ENCODE measurements at regions of chr11 and their contacts with region 1.

Region 1: DNA sequence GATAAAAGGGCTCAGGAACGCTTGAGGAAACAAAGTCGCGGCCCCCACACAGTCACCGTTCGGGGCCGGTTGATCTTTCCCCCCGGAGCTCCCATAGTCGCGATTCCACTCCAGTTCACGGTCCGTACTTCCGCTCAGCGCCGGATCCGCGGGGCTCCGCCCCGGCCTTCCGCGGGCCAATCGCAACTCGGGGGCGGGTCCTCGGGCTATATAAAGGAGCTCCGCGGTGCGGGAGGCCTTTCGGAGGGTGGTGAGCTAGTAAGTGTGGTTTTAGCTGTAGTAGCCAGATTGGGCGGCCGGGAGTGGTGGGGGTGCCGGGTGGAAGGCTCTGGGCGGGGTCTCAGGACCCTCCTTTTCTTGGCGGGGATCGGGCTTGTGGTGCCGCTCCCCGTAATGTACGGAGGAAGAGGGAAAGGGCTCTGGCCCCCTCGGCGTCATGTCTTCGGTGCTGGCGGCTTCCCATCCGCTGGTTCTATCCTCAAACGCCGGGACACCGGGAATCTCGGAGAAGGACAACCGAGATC is at the starts of genes C11orf98 and CSKMT:
- DNase-seq: peak; percentile 84
- ATAC-seq: peak; percentile 81
- H3K4me3 ChIP-seq: peak within 1 kb of the TSS; percentile 99
- H3K27ac ChIP-seq: peak within 1 kb of the TSS; percentile 96
- H3K4me1 ChIP-seq: peaks cover 24 to 43% of the 10 kb centered on the region in 2 experiments; a peak in 3 of 4 replicates
- H3K27me3 ChIP-seq: no peaks in the 10 kb centered on the region
- CTCF ChIP-seq: no peak
- POLR2A ChIP-seq: peak; percentile 99
- RAD21 ChIP-seq: no peak
- total RNA-seq, gene C11orf98: 121 TPM
- total RNA-seq, gene CSKMT: 63.5 TPM

Region 2: GRCh38 chr11:62324738-62325556 is 340.2 kb before region 1 on chr11:
- CTCF ChIA-PET with region 1: no interaction called
- POLR2A ChIA-PET with region 1: no interaction called
- RAD21 ChIA-PET with region 1: no interaction called
- intact Hi-C with region 1: no loop called
- DNase-seq: peak; percentile 34
- ATAC-seq: peak; percentile 100
- H3K4me3 ChIP-seq: no peak overlapping the region
- H3K27ac ChIP-seq: no peak overlapping the region
- H3K4me1 ChIP-seq: no peaks in the 10 kb centered on the region
- H3K27me3 ChIP-seq: no peaks in the 10 kb centered on the region
- CTCF ChIP-seq: peak; percentile 90 to 97 (median 93)
- POLR2A ChIP-seq: no peak
- RAD21 ChIP-seq: peak; percentile 86

Region 3: DNA sequence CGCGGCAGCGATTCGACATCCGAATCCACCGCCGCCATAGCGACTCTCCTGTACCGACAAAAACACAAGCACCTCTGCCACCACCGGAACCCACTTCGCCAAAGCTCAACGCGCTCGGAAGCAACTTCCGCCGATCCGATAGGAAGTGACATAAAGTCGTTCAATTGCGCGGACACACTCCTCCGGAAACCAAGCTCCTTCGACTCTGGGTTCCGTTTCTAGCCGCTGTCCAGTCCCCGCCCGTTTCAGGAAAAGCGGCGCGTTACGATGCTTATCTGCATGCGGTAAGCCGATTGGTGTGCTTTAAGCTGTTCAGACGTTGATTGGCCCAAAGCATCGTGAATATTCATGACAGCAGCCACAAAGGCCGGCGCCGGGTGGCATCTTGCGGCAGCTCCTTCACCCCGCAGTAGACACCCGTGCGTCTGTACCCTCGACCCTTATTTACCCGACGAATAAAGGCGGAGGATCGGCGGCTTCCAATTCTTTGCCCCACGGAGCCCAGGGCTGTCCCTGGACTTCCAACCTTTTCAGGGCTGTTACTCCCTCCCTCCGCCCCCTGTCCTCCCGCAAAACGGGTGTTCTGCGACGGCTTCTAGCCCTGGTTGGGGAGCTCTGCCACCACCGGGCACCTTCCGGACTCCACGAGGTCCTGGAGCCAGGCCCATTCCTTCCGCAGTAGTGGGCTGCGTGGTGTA is 73.5 kb before region 1 on chr11 and contains the start of gene TUT1:
- CTCF ChIA-PET with region 1: interaction called, 4 read pairs
- POLR2A ChIA-PET with region 1: interaction called, 37 read pairs
- RAD21 ChIA-PET with region 1: no interaction called
- intact Hi-C with region 1: loop called (anchors 5 kb)
- DNase-seq: peak; percentile 99
- ATAC-seq: peak; percentile 90
- H3K4me3 ChIP-seq: peak within 1 kb of the TSS; percentile 78 to 97
- H3K27ac ChIP-seq: peak within 1 kb of the TSS; percentile 77
- H3K4me1 ChIP-seq: peaks cover 21 to 36% of the 10 kb centered on the region in 2 experiments
- H3K27me3 ChIP-seq: no peaks in the 10 kb centered on the region
- CTCF ChIP-seq: no peak
- POLR2A ChIP-seq: peak; percentile 97
- RAD21 ChIP-seq: no peak
- total RNA-seq, gene TUT1: 49.0 TPM

Region 4: GRCh38 chr11:62621567-62622470 is 43.3 kb before region 1 on chr11 and contains the start of gene B3GAT3:
- CTCF ChIA-PET with region 1: no interaction called
- POLR2A ChIA-PET with region 1: interaction called, 19 read pairs
- RAD21 ChIA-PET with region 1: no interaction called
- intact Hi-C with region 1: no loop called
- DNase-seq: peak; percentile 99
- ATAC-seq: peak; percentile 96
- H3K4me3 ChIP-seq: peak within 1 kb of the TSS; percentile 96 to 98
- H3K27ac ChIP-seq: peak within 1 kb of the TSS; percentile 75
- H3K4me1 ChIP-seq: peaks cover 12 to 20% of the 10 kb centered on the region in 2 experiments
- H3K27me3 ChIP-seq: no peaks in the 10 kb centered on the region
- CTCF ChIP-seq: no peak
- POLR2A ChIP-seq: peak; percentile 55
- RAD21 ChIP-seq: no peak
- total RNA-seq, gene B3GAT3: 51.2 TPM

Region 5: DNA sequence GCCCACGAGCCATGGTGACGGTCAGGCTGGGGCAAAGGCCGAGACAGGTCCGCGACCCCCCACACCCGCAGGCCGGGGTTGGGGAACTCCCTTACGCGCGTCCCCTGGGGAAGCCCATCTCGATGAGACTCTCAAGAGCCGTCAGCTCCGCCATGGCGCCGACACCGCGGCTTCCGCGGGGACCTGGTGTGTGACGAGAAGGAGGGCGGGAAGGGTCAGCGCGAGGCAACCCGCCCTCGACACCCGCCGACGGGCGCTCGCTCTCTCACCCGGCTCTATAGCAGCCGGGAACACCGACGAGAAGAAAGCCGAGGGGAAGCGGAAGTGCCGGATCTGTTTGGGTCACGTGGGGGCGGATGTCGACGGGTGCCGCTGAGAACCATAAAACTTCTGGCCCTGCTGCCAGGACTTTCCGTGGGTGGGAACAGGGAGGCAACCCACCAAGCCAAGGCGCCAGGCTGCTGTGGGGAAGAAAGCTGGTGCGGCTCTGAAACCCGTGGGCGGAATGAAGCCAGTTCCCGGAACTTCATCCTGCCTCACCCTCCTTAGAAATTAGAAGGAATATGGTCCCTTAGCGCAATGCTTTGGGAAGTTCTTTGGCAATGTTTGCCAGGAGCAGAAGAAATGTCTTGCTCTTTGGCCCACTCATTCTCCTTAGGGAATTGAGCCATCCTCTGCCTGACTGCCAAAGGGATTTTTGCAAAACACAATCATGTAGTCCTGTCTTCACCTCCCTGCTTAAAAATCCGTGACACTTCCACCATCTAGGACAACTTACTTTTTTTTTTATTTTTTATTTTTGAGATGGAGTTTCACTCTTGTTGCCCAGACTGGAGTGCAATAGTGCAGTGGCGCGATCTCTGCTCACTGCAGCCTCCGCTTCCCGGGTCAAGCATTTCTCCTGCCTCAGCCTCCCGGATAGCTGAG is 13.9 kb after region 1 on chr11 and contains the start of gene UBXN1:
- CTCF ChIA-PET with region 1: interaction called, 16 read pairs
- POLR2A ChIA-PET with region 1: interaction called, 21 read pairs
- RAD21 ChIA-PET with region 1: no interaction called
- intact Hi-C with region 1: no loop called
- DNase-seq: peak; percentile 64
- ATAC-seq: peak; percentile 73
- H3K4me3 ChIP-seq: peak within 1 kb of the TSS; percentile 80 to 87
- H3K27ac ChIP-seq: peak within 1 kb of the TSS; percentile 82
- H3K4me1 ChIP-seq: peaks cover 23 to 44% of the 10 kb centered on the region in 2 experiments
- H3K27me3 ChIP-seq: no peaks in the 10 kb centered on the region
- CTCF ChIP-seq: no peak
- POLR2A ChIP-seq: no peak
- RAD21 ChIP-seq: no peak
- total RNA-seq, gene UBXN1: 94.2 TPM